ENCODE measurements at regions of chr17 and their contacts with region 1.

Region 1: GRCh38 chr17:17792551-17793377 is 44.0 kb downstream of the SREBF1 start:
- DNase-seq: peak in 2 of 3 donors; percentile 77 to 80
- ATAC-seq: peak; percentile 46 to 63
- H3K4me3 ChIP-seq: no peak overlapping the region
- H3K27ac ChIP-seq: peak overlapping the region; percentile 13
- H3K4me1 ChIP-seq: peaks cover 16% of the 10 kb centered on the region
- H3K27me3 ChIP-seq: no peaks in the 10 kb centered on the region

Region 2: GRCh38 chr17:17729620-17730249 is 63.0 kb before region 1 on chr17:
- intact Hi-C with region 1: loop called in 1 of 4 experiments (anchors 10 kb)
- DNase-seq: peak in 2 of 3 donors; percentile 27
- ATAC-seq: peak in 1 of 2 donors; percentile 22
- H3K4me3 ChIP-seq: no peak overlapping the region
- H3K27ac ChIP-seq: peak overlapping the region; percentile 5
- H3K4me1 ChIP-seq: peaks cover 11% of the 10 kb centered on the region
- H3K27me3 ChIP-seq: no peaks in the 10 kb centered on the region